Activated B cell treated with CpG ODN at 0.5 μM for 24 hours (primary cell): ENCODE measurements at regions of chr17 and their contacts with region 1.

Region 1: DNA sequence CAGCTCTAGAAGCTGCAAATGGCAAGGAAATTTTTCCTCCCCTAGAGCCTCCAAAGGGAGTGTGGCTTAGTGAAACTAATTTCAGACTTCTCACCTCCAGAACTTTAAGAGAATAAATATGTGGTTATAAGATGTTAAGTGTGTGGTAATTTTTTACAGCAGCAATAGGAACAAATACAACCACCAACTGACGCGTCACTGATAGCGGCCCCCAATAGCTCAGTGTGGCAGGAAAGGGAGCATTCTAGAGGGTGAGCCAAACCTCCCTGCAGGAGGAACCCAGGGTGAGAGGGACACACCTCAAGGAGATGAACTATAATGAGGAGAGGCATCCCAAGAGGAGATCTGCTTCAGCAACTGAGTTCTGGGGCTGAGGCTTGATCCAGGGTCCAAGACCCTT is 4.0 kb downstream of the CCL4 start:
- DNase-seq: no peak
- ATAC-seq: no peak
- H3K4me3 Mint-ChIP-seq: no peak overlapping the region
- H3K27ac Mint-ChIP-seq: no peak overlapping the region
- H3K4me1 Mint-ChIP-seq: peaks cover 46% of the 10 kb centered on the region
- H3K27me3 Mint-ChIP-seq: peaks cover 5% of the 10 kb centered on the region
- CTCF ChIP-seq: no peak

Region 2: GRCh38 chr17:35930211-35931065 is 177.2 kb before region 1 on chr17 and contains the start of gene RDM1:
- CTCF ChIA-PET with region 1: no interaction called
- POLR2A ChIA-PET with region 1: no interaction called
- intact Hi-C with region 1: no loop called
- DNase-seq: peak; percentile 70
- ATAC-seq: peak; percentile 96
- H3K4me3 Mint-ChIP-seq: peak within 1 kb of the TSS; percentile 81
- H3K27ac Mint-ChIP-seq: no peak within 1 kb of the TSS
- H3K4me1 Mint-ChIP-seq: peaks cover 10% of the 10 kb centered on the region
- H3K27me3 Mint-ChIP-seq: peaks cover 2% of the 10 kb centered on the region
- CTCF ChIP-seq: no peak
- total RNA-seq, gene RDM1: not detected in 2 replicates

Region 3: GRCh38 chr17:35942588-35943186 is 165.0 kb before region 1 on chr17:
- CTCF ChIA-PET with region 1: no interaction called
- POLR2A ChIA-PET with region 1: no interaction called
- intact Hi-C with region 1: no loop called
- DNase-seq: no peak
- ATAC-seq: no peak
- H3K4me3 Mint-ChIP-seq: no peak overlapping the region
- H3K27ac Mint-ChIP-seq: no peak overlapping the region
- H3K4me1 Mint-ChIP-seq: no peaks in the 10 kb centered on the region
- H3K27me3 Mint-ChIP-seq: peaks cover 2% of the 10 kb centered on the region
- CTCF ChIP-seq: no peak

Region 4: GRCh38 chr17:36117505-36118382 is 10.1 kb after region 1 on chr17:
- CTCF ChIA-PET with region 1: no interaction called
- POLR2A ChIA-PET with region 1: interaction called, 3 read pairs
- intact Hi-C with region 1: loop called (anchors 2 kb)
- DNase-seq: no peak
- ATAC-seq: no peak
- H3K4me3 Mint-ChIP-seq: no peak overlapping the region
- H3K27ac Mint-ChIP-seq: no peak overlapping the region
- H3K4me1 Mint-ChIP-seq: peaks cover 25% of the 10 kb centered on the region
- H3K27me3 Mint-ChIP-seq: peaks cover 12% of the 10 kb centered on the region
- CTCF ChIP-seq: no peak

Region 5: GRCh38 chr17:36127199-36127893 is 19.7 kb after region 1 on chr17:
- CTCF ChIA-PET with region 1: interaction called, 3 read pairs
- POLR2A ChIA-PET with region 1: interaction called, 5 read pairs
- intact Hi-C with region 1: loop called (anchors 2 kb)
- DNase-seq: peak; percentile 28
- ATAC-seq: peak; percentile 87
- H3K4me3 Mint-ChIP-seq: peak overlapping the region; percentile 69
- H3K27ac Mint-ChIP-seq: peak overlapping the region; percentile 87
- H3K4me1 Mint-ChIP-seq: peaks cover 69% of the 10 kb centered on the region
- H3K27me3 Mint-ChIP-seq: no peaks in the 10 kb centered on the region
- CTCF ChIP-seq: no peak

Region 6: DNA sequence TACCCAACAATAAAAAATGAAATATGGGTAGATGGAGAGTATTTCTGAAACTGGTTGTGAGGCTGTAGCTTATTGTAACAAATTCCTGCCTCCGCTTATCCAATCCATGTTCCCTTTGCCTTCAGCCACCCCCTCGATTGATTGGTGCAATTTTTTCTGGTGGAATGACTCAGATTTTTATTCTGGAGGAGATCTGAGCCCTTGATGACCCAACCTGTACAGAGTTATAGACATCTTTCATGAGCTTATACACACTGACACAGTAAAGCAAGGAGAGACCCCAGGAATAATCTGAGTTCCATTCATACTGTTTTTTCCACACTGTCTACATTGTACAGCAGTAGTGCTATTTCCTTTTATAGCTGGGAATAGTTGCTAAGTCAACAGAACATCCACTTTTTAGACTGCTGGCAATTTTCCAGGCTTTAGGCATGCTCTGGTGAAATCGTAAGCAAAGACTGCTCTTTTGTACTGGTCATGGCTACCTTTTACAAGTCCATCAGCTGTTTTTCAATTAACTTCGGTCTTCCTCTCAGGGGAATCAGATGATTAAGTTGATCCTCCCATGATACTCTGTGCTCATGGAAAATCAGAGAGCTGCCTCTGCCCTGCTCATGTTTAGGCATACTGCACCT is 26.1 kb after region 1 on chr17:
- CTCF ChIA-PET with region 1: no interaction called
- POLR2A ChIA-PET with region 1: interaction called, 5 read pairs
- intact Hi-C with region 1: loop called (anchors 2 kb)
- DNase-seq: no peak
- ATAC-seq: no peak
- H3K4me3 Mint-ChIP-seq: no peak overlapping the region
- H3K27ac Mint-ChIP-seq: peak overlapping the region; percentile 8
- H3K4me1 Mint-ChIP-seq: peaks cover 91% of the 10 kb centered on the region
- H3K27me3 Mint-ChIP-seq: no peaks in the 10 kb centered on the region
- CTCF ChIP-seq: no peak

Region 7: DNA sequence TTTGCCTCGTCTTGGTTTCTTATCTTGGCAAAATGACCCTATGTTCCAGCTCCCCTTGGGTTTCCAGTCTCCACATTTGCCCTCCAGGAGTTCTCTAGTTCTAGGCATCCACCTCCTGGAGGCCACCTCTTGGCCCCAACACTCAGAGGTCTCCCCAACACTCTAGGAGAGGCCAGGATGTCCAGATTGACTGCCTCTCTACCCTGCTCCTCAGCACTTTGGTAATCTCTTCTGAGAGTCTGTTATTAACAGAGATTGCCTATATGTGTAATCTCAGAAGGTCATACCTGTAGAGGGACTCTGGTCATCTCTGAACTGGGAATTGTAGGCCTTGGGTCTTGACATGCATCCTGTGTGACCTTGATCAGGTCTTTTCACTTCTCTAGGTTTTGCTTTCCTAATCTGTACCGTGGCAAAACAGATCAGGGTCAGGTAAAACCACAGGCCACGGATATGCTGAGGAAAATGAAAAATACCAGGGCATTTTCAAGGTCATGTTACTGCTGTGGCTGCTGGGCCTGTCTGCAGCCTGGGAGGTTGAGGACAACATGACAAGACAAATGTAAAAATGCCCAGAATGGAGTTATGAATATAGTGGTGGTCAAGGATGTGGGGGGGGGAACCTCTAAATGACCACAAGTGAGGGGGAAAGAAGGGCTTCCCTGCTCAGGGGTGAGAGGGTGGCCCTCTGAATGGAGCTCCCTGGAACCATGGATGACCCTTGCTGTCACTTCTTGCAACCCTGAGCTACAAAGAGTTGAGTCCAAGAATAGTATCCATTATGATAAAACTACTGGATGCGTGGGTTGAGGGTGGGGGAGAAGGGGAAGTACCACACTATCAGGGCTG is 98.2 kb after region 1 on chr17:
- CTCF ChIA-PET with region 1: no interaction called
- POLR2A ChIA-PET with region 1: interaction called, 12 read pairs
- intact Hi-C with region 1: no loop called
- DNase-seq: no peak
- ATAC-seq: no peak
- H3K4me3 Mint-ChIP-seq: no peak overlapping the region
- H3K27ac Mint-ChIP-seq: no peak overlapping the region
- H3K4me1 Mint-ChIP-seq: peaks cover 50% of the 10 kb centered on the region
- H3K27me3 Mint-ChIP-seq: peaks cover 11% of the 10 kb centered on the region
- CTCF ChIP-seq: no peak